Activated CD4-positive, alpha-beta memory T cell treated with anti-CD3 and anti-CD28 coated beads for 36 hours (primary cell): ENCODE measurements at regions of chr5 and their contacts with region 1.

Region 1: DNA sequence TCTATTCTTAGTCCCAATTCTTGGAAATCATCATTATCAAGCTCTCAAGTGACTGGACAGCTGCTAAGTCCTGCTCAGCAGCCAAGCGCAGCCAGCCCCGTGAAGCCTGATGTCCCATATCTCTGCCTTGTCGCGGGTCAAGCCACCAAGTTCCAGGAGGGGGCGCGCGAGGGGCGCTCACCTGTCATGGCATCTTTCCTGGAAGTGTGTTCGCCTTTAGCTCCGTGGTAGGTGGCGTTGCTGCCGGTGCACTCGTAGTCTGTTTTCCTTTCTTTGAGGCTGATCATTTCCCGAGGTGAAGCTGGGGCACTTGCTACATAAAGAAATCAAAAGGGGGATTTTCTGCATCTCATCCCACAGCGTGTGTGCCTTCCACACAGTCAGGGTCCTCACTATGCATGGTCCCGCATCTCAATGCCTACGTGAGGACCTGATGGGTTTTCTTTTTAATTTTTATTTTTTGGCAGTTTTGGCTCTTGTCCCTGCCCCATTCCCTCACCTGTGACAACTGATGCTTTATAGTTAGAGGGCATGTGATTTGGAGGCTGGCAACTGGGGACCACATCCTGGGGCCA is 227.0 kb upstream of the DAP start:
- DNase-seq: peak; percentile 85
- H3K4me3 Mint-ChIP-seq: peak overlapping the region; percentile 33
- H3K27ac Mint-ChIP-seq: no peak overlapping the region
- H3K4me1 Mint-ChIP-seq: peaks cover 8% of the 10 kb centered on the region
- H3K27me3 Mint-ChIP-seq: peaks cover 9% of the 10 kb centered on the region

Region 2: DNA sequence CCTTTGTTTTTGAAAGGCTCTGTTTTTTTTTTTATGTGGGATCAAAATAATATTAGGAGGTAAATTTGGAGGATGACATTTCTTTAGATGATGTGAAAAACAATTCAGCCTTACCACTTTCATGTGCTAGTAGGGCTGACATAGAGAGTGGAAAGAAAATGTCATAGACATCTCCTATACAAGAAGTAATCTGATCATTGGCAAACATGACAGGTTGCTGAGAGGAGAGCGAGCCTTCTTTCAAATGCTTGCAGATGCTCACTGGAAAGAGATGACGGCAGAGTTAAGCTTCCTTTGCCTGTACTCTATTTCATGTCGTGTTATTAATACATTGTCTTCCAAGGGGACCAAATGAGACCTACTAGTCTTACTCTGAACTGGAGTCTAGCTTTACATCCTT is 66.9 kb before region 1 on chr5:
- CTCF ChIA-PET with region 1: no interaction called
- POLR2A ChIA-PET with region 1: no interaction called
- intact Hi-C with region 1: no loop called
- DNase-seq: no peak
- H3K4me3 Mint-ChIP-seq: no peak overlapping the region
- H3K27ac Mint-ChIP-seq: no peak overlapping the region
- H3K4me1 Mint-ChIP-seq: no peaks in the 10 kb centered on the region
- H3K27me3 Mint-ChIP-seq: peaks cover 10% of the 10 kb centered on the region

Region 3: DNA sequence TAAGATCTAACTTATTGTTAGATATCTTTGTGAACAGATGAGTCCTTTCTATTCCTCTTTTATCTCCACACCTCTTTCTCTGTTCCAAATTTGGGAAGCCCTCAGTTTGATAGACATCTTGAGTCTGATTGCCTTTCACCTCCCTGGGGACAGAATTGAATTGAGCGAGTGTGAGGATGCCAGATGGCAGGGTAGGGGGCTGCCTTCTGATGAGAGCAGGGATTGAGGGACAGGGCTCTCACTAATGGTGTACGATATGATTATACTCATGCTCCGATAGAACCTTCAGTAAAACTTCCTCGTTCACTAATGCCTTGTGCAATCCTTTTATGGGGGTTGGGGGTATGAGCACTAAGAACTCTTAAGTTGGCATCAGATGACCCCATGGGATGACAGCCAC is 54.9 kb before region 1 on chr5:
- CTCF ChIA-PET with region 1: no interaction called
- POLR2A ChIA-PET with region 1: no interaction called
- intact Hi-C with region 1: no loop called
- DNase-seq: no peak
- H3K4me3 Mint-ChIP-seq: no peak overlapping the region
- H3K27ac Mint-ChIP-seq: no peak overlapping the region
- H3K4me1 Mint-ChIP-seq: no peaks in the 10 kb centered on the region
- H3K27me3 Mint-ChIP-seq: peaks cover 4% of the 10 kb centered on the region

Region 4: DNA sequence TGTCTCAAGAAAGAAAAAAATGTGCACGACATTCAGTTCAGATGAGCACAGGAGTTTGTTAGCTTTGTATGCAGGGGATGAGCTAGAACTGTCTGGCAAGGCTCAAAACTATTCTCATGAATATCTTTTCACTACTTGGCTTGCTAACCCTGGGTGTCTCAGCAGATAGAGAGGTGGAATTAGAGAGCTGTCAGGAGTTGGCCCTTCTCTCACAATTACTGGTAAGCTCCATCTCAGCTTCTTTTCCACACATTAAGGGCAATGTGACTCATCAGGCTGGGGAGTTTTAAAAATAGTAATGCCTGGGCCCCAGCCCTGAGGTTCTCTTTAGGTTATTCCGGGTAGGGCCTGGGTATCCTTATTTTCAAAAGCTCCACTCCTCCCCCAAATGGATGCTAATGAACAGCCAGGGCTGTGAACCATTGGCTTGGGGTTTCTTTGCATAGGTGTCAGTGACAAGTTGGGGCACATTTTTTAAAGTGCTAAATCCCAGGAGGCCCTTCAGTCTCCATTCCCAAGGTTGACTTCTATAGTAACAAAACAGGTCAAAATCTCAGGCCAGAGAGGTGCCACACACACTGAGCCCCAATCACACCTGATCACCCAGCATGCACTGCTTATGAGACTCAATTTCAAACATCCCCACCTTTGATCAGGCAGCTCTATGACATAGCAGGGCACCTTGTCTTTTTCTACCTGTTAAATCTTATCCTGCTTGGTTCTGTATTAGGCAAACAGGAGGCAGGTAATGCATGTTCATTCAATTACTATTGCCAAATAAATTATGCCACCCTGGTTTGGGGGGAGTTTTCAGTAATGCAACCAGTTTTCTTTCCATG is 12.7 kb after region 1 on chr5:
- CTCF ChIA-PET with region 1: interaction called, 11 read pairs
- POLR2A ChIA-PET with region 1: no interaction called
- intact Hi-C with region 1: no loop called
- DNase-seq: no peak
- H3K4me3 Mint-ChIP-seq: no peak overlapping the region
- H3K27ac Mint-ChIP-seq: no peak overlapping the region
- H3K4me1 Mint-ChIP-seq: no peaks in the 10 kb centered on the region
- H3K27me3 Mint-ChIP-seq: peaks cover 2% of the 10 kb centered on the region

Region 5: DNA sequence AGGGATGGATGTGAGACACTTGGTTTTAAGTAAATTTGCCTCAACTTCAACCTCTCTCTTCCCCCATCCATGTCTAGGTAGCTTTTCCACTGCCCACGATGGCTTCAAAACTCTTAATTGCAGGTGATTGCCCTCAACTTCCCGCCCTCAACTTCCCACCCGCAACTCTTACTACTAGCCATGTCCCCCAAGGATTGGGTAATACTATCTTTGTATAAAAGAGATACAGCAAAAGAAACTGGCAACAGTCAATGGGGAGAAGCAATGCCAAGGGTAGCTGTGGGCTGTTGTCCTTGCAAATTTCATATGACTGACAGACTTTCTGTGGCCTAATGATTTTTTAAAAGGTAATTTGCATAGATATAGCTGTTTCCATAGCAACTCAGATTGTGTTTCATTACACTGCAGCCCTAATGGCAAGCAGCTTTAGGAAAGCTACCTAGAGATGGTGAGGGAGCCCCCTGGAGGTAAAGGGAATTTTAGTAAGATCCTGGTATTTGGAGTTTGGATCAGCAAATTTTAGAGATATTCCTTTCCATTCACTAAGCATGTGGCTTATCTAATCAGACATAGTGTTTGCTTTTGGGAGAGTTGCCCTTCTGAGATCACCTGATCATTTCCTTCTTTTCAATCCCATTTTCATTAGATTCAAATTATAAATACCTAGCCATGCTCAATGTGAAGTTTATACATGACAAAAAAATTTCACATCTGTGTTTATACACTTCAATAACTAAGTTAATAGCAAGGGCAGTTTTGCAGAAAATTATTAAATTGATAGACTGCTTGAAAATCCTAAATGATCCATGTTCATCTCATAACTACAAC is 194.6 kb after region 1 on chr5:
- CTCF ChIA-PET with region 1: interaction called, 4 read pairs
- POLR2A ChIA-PET with region 1: no interaction called
- intact Hi-C with region 1: loop called (anchors 5 kb)
- DNase-seq: no peak
- H3K4me3 Mint-ChIP-seq: no peak overlapping the region
- H3K27ac Mint-ChIP-seq: no peak overlapping the region
- H3K4me1 Mint-ChIP-seq: no peaks in the 10 kb centered on the region
- H3K27me3 Mint-ChIP-seq: no peaks in the 10 kb centered on the region